WTC11 (cell line): ENCODE measurements at regions of chr3 and their contacts with region 1.

Region 1: DNA sequence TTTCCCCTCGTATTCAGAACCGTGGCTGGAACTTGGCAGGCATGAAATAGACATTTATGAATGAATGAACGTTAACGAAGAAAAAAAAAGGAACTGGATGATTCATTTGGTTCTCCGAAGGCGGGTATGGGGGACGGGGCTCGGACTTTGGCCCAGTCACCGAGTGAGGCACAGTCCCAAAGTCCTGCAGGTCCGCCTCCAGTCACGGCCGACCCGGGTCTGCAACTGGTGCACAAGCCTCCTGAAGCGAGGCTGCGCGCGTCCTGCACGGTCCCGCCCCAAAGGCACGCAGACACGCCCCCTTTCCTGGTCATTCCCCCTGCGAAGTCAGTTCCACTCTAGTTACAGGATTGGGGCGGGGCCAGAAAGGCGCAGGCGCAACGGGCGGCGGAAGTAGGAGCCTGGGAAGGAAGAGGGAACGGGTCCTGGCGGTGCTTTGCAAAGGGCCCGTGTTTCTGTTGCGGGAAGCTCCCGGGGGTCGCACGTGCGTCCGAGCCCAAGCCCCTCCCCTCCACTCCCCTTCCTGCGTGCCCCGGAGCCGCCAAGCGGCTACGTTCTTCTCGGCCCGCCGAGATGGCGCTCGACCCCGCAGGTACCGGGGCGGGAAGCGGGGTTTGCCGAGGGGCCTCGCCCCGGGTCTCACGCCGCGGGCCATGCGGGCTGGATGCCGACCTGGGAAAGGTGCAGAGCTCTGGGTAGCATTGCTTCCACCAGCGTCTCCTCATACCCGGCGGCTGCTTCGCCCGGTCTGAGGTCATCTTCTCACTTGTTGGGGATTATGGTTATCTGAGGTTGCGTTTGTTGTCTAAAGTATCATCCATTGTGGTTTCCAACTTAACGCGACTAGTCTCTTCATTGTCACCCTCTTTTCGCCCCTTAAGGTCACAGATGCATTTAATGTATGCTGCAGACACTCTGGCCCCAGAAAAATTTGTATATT is at the start of gene CMC1:
- DNase-seq: peak; percentile 99
- ATAC-seq: peak; percentile 91
- H3K4me3 Mint-ChIP-seq: peak within 1 kb of the TSS; percentile 84
- H3K27ac Mint-ChIP-seq: peak within 1 kb of the TSS; percentile 91
- H3K4me1 Mint-ChIP-seq: peaks cover 69% of the 10 kb centered on the region
- H3K27me3 Mint-ChIP-seq: no peaks in the 10 kb centered on the region
- CTCF ChIP-seq: no peak
- total RNA-seq, gene CMC1: 25.3 to 29.6 TPM (median 26.4 TPM) in 3 replicates

Region 2: DNA sequence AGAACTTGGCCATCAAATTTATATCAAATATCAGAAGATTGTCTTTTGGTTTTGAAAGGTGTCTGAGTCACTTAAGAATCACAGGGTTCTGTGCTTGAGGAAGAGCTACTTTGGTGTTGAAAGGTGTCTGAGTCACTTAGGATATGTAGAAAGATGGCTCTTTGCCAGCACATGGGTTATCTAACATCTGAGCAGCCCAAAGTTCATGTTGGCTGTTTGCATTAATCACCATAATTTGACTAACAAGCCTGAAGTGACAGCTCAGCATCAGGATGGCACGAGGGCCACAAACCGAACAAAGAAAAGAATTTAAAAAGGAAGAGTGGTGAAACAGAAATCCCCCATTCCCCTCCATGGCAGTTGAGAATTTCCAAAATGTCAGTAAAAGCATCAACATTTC is 190.6 kb before region 1 on chr3:
- CTCF ChIA-PET with region 1: no interaction called
- POLR2A ChIA-PET with region 1: interaction called, 10 read pairs
- DNase-seq: no peak
- ATAC-seq: no peak
- H3K4me3 Mint-ChIP-seq: no peak overlapping the region
- H3K27ac Mint-ChIP-seq: peak overlapping the region; percentile 22; the same call in 1 of the 2 replicates
- H3K4me1 Mint-ChIP-seq: peaks cover 26% of the 10 kb centered on the region
- H3K27me3 Mint-ChIP-seq: peaks cover 3% of the 10 kb centered on the region; the same call in 1 of the 2 replicates
- CTCF ChIP-seq: no peak

Region 3: GRCh38 chr3:28958656-28959055 is 717.2 kb after region 1 on chr3:
- CTCF ChIA-PET with region 1: no interaction called
- POLR2A ChIA-PET with region 1: no interaction called
- DNase-seq: no peak
- ATAC-seq: no peak
- H3K4me3 Mint-ChIP-seq: no peak overlapping the region
- H3K27ac Mint-ChIP-seq: no peak overlapping the region
- H3K4me1 Mint-ChIP-seq: peaks cover 3% of the 10 kb centered on the region
- H3K27me3 Mint-ChIP-seq: no peaks in the 10 kb centered on the region
- CTCF ChIP-seq: no peak